SK-N-SH (cell line): ENCODE measurements at regions of chr9 and their contacts with region 1.

Region 1: GRCh38 chr9:36612946-36613345 is 40.3 kb downstream of the MELK start:
- DNase-seq: no peak
- H3K4me3 ChIP-seq: no peak overlapping the region
- H3K27ac ChIP-seq: no peak overlapping the region
- H3K4me1 ChIP-seq: no peaks in the 10 kb centered on the region
- H3K27me3 ChIP-seq: no peaks in the 10 kb centered on the region
- CTCF ChIP-seq: no peak
- EP300 ChIP-seq: no peak
- RAD21 ChIP-seq: no peak

Region 2: DNA sequence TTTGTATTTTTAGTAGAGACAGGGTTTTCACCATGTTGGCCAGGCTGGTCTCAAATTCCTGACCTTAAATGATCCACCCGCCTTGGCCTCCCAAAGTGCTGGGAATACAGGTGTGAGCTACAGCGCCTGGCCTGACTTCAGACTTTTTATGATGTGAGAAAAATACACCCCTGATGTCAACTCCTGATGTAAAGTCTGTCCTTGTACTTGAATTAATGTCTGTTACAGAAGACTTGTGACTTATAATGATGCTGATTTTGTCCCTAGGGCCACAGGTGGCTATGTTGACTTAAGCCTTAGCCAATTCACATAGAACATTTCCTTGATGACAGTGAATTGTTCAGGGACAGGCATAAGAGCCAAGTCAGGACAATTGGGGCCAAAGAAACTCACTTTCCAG is 82.7 kb before region 1 on chr9:
- CTCF ChIA-PET with region 1: no interaction called
- POLR2A ChIA-PET with region 1: no interaction called
- DNase-seq: no peak
- H3K4me3 ChIP-seq: no peak overlapping the region
- H3K27ac ChIP-seq: no peak overlapping the region
- H3K4me1 ChIP-seq: no peaks in the 10 kb centered on the region
- H3K27me3 ChIP-seq: no peaks in the 10 kb centered on the region
- CTCF ChIP-seq: no peak
- EP300 ChIP-seq: no peak
- RAD21 ChIP-seq: no peak

Region 3: GRCh38 chr9:36597412-36598178 is 15.4 kb before region 1 on chr9:
- CTCF ChIA-PET with region 1: interaction called, 10 read pairs
- POLR2A ChIA-PET with region 1: no interaction called
- DNase-seq: peak; percentile 51
- H3K4me3 ChIP-seq: no peak overlapping the region
- H3K27ac ChIP-seq: peak overlapping the region in 1 of 2 experiments; percentile 16; a peak in 1 of 4 replicates
- H3K4me1 ChIP-seq: peaks cover 0 to 15% of the 10 kb centered on the region in 2 experiments; a peak in 1 of 4 replicates
- H3K27me3 ChIP-seq: no peaks in the 10 kb centered on the region
- CTCF ChIP-seq: peak; percentile 70
- EP300 ChIP-seq: no peak
- RAD21 ChIP-seq: peak; percentile 41